Sigmoid colon (tissue), 7 donors: ENCODE measurements at regions of chr19 and their contacts with region 1.

Region 1: GRCh38 chr19:2427429-2428320 is at the start of gene TIMM13:
- DNase-seq: peak; percentile 99
- H3K4me3 ChIP-seq: peak within 1 kb of the TSS; percentile 70 to 98 (median 85)
- H3K27ac ChIP-seq: peak within 1 kb of the TSS; percentile 94 to 98 (median 98)
- H3K4me1 ChIP-seq: peaks cover 0 to 48% (median 39%) of the 10 kb centered on the region in 4 donors
- H3K27me3 ChIP-seq: no peaks in the 10 kb centered on the region
- CTCF ChIP-seq: no peak
- EP300 ChIP-seq: peak in 2 of 4 donors; percentile 15 to 18
- POLR2A ChIP-seq: peak; percentile 16 to 60
- total RNA-seq, gene TIMM13: 23.6 to 29.3 (median 26.3) TPM

Region 2: DNA sequence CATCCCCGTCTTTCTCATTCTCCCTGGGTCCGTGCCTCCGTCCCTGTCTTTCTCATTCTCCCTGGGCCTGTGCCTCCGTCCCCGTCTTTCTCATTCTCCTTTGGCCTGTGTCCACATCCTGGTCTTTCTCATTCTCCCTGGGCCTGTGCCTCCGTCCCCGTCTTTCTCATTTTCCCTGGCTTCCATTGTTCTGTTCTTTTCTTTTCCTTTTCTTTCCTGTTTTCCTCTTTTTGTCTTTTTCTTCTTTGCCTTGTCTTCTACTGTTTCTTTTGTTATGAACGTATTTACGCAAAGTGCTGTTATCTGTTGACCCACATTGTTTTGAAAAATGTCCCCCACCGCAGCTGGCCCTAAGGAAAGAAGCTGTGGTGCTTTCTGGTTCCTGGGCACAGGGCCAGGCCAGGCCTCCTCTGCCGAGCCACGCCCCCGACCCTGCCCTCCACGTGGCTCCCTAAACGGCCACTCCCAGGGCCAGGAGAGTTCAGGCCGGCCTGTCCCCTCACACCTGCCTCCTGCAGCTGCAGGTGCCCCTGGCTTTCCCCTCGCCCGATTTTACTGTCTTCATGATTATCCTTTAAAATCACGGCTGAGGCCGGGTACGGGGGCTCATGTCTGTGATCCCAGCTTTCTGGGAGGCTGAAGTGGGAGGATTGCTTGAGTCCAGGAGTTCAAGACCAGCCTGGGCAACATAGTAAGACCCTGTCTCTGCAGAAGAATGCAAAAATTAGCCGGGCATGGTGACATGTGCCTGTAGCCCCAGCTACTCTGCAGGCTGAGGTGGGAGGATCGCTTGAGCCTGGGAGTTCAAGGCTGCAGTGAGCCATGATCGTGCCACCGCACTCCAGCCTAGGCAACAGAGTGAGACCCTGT is 81.6 kb before region 1 on chr19:
- intact Hi-C with region 1: no loop called
- DNase-seq: no peak
- H3K4me3 ChIP-seq: no peak overlapping the region
- H3K27ac ChIP-seq: no peak overlapping the region
- H3K4me1 ChIP-seq: peaks cover 0 to 9% (median 0%) of the 10 kb centered on the region in 4 donors
- H3K27me3 ChIP-seq: no peaks in the 10 kb centered on the region
- CTCF ChIP-seq: no peak
- EP300 ChIP-seq: no peak
- POLR2A ChIP-seq: no peak

Region 3: GRCh38 chr19:2782936-2783780 is 355.5 kb after region 1 on chr19 and contains the start of gene SGTA:
- intact Hi-C with region 1: loop called (anchors 10 kb)
- DNase-seq: peak; percentile 99
- H3K4me3 ChIP-seq: peak within 1 kb of the TSS; percentile 76 to 100 (median 90)
- H3K27ac ChIP-seq: peak within 1 kb of the TSS; percentile 87 to 96 (median 94)
- H3K4me1 ChIP-seq: peaks cover 0 to 72% (median 54%) of the 10 kb centered on the region in 4 donors
- H3K27me3 ChIP-seq: no peaks in the 10 kb centered on the region
- CTCF ChIP-seq: peak in 3 of 4 experiments; percentile 15 to 35 (median 29)
- EP300 ChIP-seq: peak in 1 of 4 donors; percentile 68
- POLR2A ChIP-seq: peak; percentile 78 to 87
- total RNA-seq, gene SGTA: 42.5 to 48.1 (median 45.2) TPM